Ovary (tissue), 10 donors: ENCODE measurements at regions of chr4 and their contacts with region 1.

Region 1: GRCh38 chr4:33975995-33976394 is 2268.3 kb downstream of the ARAP2 start:
- DNase-seq: no peak
- H3K4me3 ChIP-seq: no peak overlapping the region
- H3K27ac ChIP-seq: no peak overlapping the region
- H3K4me1 ChIP-seq: no peaks in the 10 kb centered on the region
- H3K27me3 ChIP-seq: no peaks in the 10 kb centered on the region
- CTCF ChIP-seq: no peak
- EP300 ChIP-seq: no peak
- POLR2A ChIP-seq: no peak

Region 2: DNA sequence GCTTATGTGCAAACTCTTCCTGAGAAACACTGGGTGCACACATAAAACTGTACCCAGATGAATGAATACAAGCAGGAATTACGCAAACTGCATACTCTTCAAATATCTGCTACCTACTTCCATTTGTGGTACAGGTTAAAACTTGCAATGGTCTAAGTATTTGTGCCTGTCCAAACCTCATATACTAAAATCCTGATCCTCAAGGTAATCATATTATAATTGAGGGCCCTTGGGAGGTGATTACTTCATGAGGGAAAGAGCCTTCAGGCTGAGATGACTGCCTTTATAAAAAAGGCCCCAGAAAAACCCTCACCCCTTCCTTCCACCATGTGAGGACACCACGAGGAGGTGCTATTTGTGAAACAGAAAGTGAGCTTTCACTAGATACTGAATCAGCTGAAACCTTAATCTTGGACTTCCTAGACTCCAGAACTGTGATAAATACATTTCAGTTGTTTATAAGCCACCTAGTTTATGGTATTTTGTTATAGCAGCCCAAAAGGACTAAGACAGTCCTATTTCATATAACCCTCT is 1278.6 kb before region 1 on chr4:
- intact Hi-C with region 1: loop called in 1 of 4 experiments (anchors 10 kb)
- DNase-seq: no peak
- H3K4me3 ChIP-seq: no peak overlapping the region
- H3K27ac ChIP-seq: no peak overlapping the region
- H3K4me1 ChIP-seq: no peaks in the 10 kb centered on the region
- H3K27me3 ChIP-seq: no peaks in the 10 kb centered on the region
- CTCF ChIP-seq: no peak
- EP300 ChIP-seq: no peak
- POLR2A ChIP-seq: no peak

Region 3: GRCh38 chr4:34009951-34010350 is 34.0 kb after region 1 on chr4:
- intact Hi-C with region 1: no loop called
- DNase-seq: no peak
- H3K4me3 ChIP-seq: no peak overlapping the region
- H3K27ac ChIP-seq: no peak overlapping the region
- H3K4me1 ChIP-seq: no peaks in the 10 kb centered on the region
- H3K27me3 ChIP-seq: no peaks in the 10 kb centered on the region
- CTCF ChIP-seq: no peak
- EP300 ChIP-seq: no peak
- POLR2A ChIP-seq: no peak